ENCODE measurements at regions of chr4 and their contacts with region 1.

Region 1: DNA sequence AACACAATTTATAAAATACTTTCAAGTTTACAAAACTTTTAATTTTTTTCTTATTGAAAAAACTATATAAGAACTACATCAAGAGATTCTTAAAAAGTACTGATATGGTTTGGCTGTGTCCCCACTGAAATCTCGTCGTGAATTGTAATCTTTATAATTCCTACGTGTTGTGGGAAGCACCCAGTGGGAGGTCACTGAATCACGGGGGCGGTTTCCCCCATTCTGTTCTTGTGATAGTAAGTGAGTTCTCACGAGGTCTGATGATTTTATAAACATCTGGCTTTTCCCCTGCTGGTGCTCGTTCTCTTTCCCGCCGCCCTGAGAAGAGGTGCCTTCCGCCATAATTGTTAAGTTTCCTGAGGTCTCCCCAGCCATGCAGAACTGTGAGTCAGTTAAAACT is 88.5 kb downstream of the FRAS1 start:
- DNase-seq: no peak

Region 2: DNA sequence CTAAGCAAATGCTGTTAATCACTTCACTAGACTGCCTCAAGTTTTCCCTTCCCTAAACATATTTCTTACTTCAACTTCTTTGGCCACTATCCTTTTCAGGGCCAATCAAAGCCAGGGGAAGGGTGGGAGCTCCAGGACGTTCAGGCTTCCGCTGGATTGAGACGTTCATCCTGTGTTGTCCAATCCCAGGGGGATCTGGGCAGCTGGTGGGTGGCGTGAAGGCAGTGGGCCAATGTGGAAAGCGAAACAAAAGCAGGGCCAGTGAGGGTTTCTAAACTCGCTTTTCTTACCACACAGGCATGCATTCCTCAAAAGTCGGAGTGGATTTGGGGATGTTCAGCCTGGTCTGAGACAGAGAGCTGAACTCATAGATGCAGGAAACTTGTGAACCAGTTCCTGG is 532.4 kb before region 1 on chr4:
- CTCF ChIA-PET with region 1: interaction called, 10 read pairs
- POLR2A ChIA-PET with region 1: no interaction called
- DNase-seq: no peak

Measured in HEK293T (cell line).